CD4-positive, alpha-beta memory T cell (primary cell): ENCODE measurements at regions of chr17 and their contacts with region 1.

Region 1: DNA sequence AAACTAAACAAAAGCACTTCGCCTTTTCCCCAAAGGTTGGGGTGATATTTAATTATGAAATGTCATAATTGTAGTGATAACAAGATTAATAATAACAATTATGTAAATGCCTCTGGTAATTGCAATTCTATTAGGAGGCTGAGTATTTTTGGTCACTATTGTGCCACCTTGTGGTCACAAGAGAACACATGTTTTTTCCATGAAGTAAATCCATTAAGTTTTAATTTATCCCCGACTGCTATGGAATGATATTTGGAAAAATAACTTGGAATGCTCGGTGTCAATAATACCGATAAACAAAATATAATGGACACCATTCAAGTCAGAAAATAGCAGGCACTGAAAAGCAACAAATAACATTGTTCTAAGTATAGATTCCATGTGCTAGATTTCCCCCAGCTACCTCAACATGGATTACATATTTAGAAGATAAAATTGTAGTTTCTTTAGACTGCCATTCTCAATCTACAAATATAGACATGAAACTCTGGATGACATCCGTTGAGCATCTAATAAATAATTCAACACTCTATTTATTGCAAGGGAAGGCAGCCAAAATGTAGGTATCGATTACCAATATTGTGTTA is 25.0 kb upstream of the KCNJ2 start:
- DNase-seq: no peak
- H3K4me3 ChIP-seq: no peak overlapping the region
- H3K4me3 Mint-ChIP-seq: no peak overlapping the region
- H3K27ac ChIP-seq: no peak overlapping the region
- H3K27ac Mint-ChIP-seq: no peak overlapping the region
- H3K4me1 ChIP-seq: no peaks in the 10 kb centered on the region
- H3K4me1 Mint-ChIP-seq: no peaks in the 10 kb centered on the region
- H3K27me3 ChIP-seq: no peaks in the 10 kb centered on the region
- H3K27me3 Mint-ChIP-seq: peaks cover 0 to 4% of the 10 kb centered on the region in 2 donors

Region 2: GRCh38 chr17:68878226-68878885 is 1266.0 kb before region 1 on chr17:
- CTCF ChIA-PET with region 1: no interaction called
- POLR2A ChIA-PET with region 1: no interaction called
- intact Hi-C with region 1: no loop called
- DNase-seq: no peak
- H3K4me3 ChIP-seq: no peak overlapping the region
- H3K4me3 Mint-ChIP-seq: no peak overlapping the region
- H3K27ac ChIP-seq: no peak overlapping the region
- H3K27ac Mint-ChIP-seq: no peak overlapping the region
- H3K4me1 ChIP-seq: no peaks in the 10 kb centered on the region
- H3K4me1 Mint-ChIP-seq: no peaks in the 10 kb centered on the region
- H3K27me3 ChIP-seq: no peaks in the 10 kb centered on the region
- H3K27me3 Mint-ChIP-seq: peaks cover 6 to 13% of the 10 kb centered on the region in 2 donors

Region 3: GRCh38 chr17:69574257-69575197 is 569.8 kb before region 1 on chr17:
- CTCF ChIA-PET with region 1: interaction called, 9 read pairs
- POLR2A ChIA-PET with region 1: no interaction called
- intact Hi-C with region 1: loop called (anchors 1 kb)
- DNase-seq: no peak
- H3K4me3 ChIP-seq: no peak overlapping the region
- H3K4me3 Mint-ChIP-seq: no peak overlapping the region
- H3K27ac ChIP-seq: no peak overlapping the region
- H3K27ac Mint-ChIP-seq: no peak overlapping the region
- H3K4me1 ChIP-seq: no peaks in the 10 kb centered on the region
- H3K4me1 Mint-ChIP-seq: no peaks in the 10 kb centered on the region
- H3K27me3 ChIP-seq: no peaks in the 10 kb centered on the region
- H3K27me3 Mint-ChIP-seq: peaks cover 3 to 11% of the 10 kb centered on the region in 2 donors

Region 4: DNA sequence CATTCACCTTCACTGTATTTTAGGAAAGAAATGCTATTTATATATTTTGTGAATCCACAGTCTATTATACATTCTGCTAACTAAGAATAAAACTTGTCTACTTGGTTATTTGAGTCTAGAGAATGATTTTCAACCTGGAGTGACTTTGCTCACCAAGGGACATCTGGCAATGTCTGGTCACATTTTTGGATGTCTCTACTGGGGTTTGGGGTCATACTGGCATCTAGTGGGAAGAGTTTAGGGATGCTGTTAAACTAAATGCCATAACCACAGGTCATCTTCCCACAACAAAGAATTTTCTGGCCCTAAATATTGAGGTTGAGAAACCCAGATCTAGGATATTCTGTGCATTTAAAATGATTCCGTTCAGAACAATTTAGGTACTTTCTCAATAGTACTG is 43.4 kb before region 1 on chr17:
- CTCF ChIA-PET with region 1: no interaction called
- POLR2A ChIA-PET with region 1: no interaction called
- intact Hi-C with region 1: no loop called
- DNase-seq: no peak
- H3K4me3 ChIP-seq: no peak overlapping the region
- H3K4me3 Mint-ChIP-seq: no peak overlapping the region
- H3K27ac ChIP-seq: no peak overlapping the region
- H3K27ac Mint-ChIP-seq: no peak overlapping the region
- H3K4me1 ChIP-seq: no peaks in the 10 kb centered on the region
- H3K4me1 Mint-ChIP-seq: peaks cover 0 to 3% (median 0%) of the 10 kb centered on the region in 4 donors
- H3K27me3 ChIP-seq: no peaks in the 10 kb centered on the region
- H3K27me3 Mint-ChIP-seq: peaks cover 0 to 3% of the 10 kb centered on the region in 2 donors